ENCODE measurements at regions of chr19 and their contacts with region 1.

Region 1: GRCh38 chr19:1020868-1021425 is at the start of gene TMEM259:
- DNase-seq: peak; percentile 99
- ATAC-seq: peak; percentile 90
- H3K4me3 Mint-ChIP-seq: peak within 1 kb of the TSS; percentile 94
- H3K27ac Mint-ChIP-seq: peak within 1 kb of the TSS; percentile 96
- H3K4me1 Mint-ChIP-seq: peaks cover 35% of the 10 kb centered on the region
- H3K27me3 Mint-ChIP-seq: no peaks in the 10 kb centered on the region
- total RNA-seq, gene TMEM259: 106 to 128 TPM

Region 2: DNA sequence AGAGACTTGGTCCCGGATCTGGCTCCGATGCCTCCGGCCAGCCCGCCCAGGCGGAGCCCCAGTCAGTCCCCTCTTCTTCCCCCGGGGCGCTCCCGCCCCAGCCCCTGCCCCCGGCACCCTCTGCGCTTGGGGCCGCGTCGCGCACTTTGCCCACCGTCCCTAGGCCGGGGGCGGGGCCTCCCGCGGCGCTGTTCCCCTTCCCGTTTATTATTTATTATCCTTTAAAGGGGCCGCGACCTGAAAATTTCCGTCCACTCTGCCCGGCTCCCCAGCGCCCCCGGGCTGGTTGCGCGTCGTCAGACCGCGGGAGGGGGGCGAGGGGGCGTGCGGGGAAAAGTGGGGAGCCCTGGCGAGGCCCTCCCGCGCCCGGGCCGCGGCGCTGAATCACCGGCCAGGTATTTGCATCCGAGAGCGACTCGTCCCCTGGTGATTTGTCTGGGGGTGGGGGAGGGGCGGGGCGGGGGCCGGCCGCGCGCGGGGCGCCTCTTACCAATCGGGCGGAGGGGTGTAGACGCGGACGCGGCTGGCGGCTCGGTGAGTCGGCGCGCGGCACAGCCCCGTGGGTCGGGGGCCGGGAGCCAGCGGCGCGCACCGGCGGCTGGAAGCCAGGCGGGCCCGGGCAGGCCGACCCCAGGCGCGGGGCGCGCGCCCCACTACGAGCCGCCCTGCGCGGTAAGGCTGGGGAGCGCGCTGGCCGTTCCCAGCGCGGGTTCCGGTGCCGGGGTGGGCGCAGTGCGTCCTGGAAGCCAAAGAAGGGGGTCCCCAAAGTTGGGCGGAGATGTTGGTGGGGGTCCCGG is 95.2 kb before region 1 on chr19 and contains the start of gene ARID3A:
- CTCF ChIA-PET with region 1: no interaction called
- POLR2A ChIA-PET with region 1: interaction called, 4 read pairs
- intact Hi-C with region 1: loop called in 1 of 2 experiments (anchors 1 kb)
- DNase-seq: peak; percentile 85
- ATAC-seq: peak; percentile 42
- H3K4me3 Mint-ChIP-seq: peak within 1 kb of the TSS; percentile 70
- H3K27ac Mint-ChIP-seq: peak within 1 kb of the TSS; percentile 37
- H3K4me1 Mint-ChIP-seq: peaks cover 17% of the 10 kb centered on the region
- H3K27me3 Mint-ChIP-seq: no peaks in the 10 kb centered on the region
- total RNA-seq, gene ARID3A: 25.1 to 36.0 TPM

Region 3: GRCh38 chr19:1039646-1040475 is 18.9 kb after region 1 on chr19 and contains the start of gene ABCA7:
- CTCF ChIA-PET with region 1: interaction called, 7 read pairs
- POLR2A ChIA-PET with region 1: interaction called, 4 read pairs
- intact Hi-C with region 1: loop called (anchors 1 to 2 kb)
- DNase-seq: peak; percentile 100
- ATAC-seq: peak; percentile 96
- H3K4me3 Mint-ChIP-seq: peak within 1 kb of the TSS; percentile 86
- H3K27ac Mint-ChIP-seq: peak within 1 kb of the TSS; percentile 74
- H3K4me1 Mint-ChIP-seq: peaks cover 34% of the 10 kb centered on the region
- H3K27me3 Mint-ChIP-seq: no peaks in the 10 kb centered on the region
- total RNA-seq, gene ABCA7: 14.4 to 16.9 TPM

Region 4: GRCh38 chr19:1074544-1075283 is 53.8 kb after region 1 on chr19:
- CTCF ChIA-PET with region 1: interaction called, 3 read pairs
- POLR2A ChIA-PET with region 1: interaction called, 8 read pairs
- intact Hi-C with region 1: loop called (anchors 1 to 2 kb)
- DNase-seq: peak; percentile 93
- ATAC-seq: peak; percentile 22
- H3K4me3 Mint-ChIP-seq: peak overlapping the region; percentile 52
- H3K27ac Mint-ChIP-seq: peak overlapping the region; percentile 84
- H3K4me1 Mint-ChIP-seq: peaks cover 63% of the 10 kb centered on the region
- H3K27me3 Mint-ChIP-seq: no peaks in the 10 kb centered on the region

Region 5: GRCh38 chr19:1094975-1095701 is 74.2 kb after region 1 on chr19 and contains the start of gene POLR2E:
- CTCF ChIA-PET with region 1: no interaction called
- POLR2A ChIA-PET with region 1: no interaction called
- intact Hi-C with region 1: loop called in 1 of 2 experiments (anchors 1 kb)
- DNase-seq: peak; percentile 99
- ATAC-seq: peak; percentile 89
- H3K4me3 Mint-ChIP-seq: peak within 1 kb of the TSS; percentile 88
- H3K27ac Mint-ChIP-seq: peak within 1 kb of the TSS; percentile 93
- H3K4me1 Mint-ChIP-seq: peaks cover 49% of the 10 kb centered on the region
- H3K27me3 Mint-ChIP-seq: no peaks in the 10 kb centered on the region
- total RNA-seq, gene POLR2E: 171 to 229 TPM

Region 6: GRCh38 chr19:1173845-1174809 is 153.2 kb after region 1 on chr19 and contains the start of gene SBNO2:
- CTCF ChIA-PET with region 1: no interaction called
- POLR2A ChIA-PET with region 1: no interaction called
- intact Hi-C with region 1: loop called in 1 of 2 experiments (anchors 1 kb)
- DNase-seq: peak; percentile 96
- ATAC-seq: peak; percentile 93
- H3K4me3 Mint-ChIP-seq: peak within 1 kb of the TSS; percentile 89
- H3K27ac Mint-ChIP-seq: peak within 1 kb of the TSS; percentile 92
- H3K4me1 Mint-ChIP-seq: peaks cover 34% of the 10 kb centered on the region
- H3K27me3 Mint-ChIP-seq: no peaks in the 10 kb centered on the region
- total RNA-seq, gene SBNO2: 108 to 113 TPM

Measured in activated CD4-positive, alpha-beta T cell treated with anti-CD3 and anti-CD28 coated beads for 36 hours (primary cell).